ENCODE measurements at regions of chr16 and their contacts with region 1.

Region 1: DNA sequence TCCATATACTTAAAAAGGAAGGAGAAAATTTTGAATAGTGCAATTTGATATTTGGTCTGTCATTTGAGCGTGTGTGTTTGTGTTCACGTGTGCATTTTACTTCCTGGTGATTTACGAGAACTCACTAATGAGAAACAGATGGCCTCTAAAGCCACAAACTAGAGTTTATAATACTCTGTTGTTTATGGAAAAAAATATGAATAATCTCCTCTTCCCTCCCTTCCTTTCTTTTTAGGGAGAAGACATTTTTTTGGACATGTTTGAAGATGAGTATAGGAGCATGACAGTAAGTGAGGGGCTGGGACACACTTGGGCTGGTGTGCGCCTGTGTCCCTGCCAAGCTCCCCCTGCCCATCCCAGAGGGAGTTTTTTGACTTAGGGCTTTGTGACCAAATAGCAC is 102.7 kb downstream of the CLEC16A start:
- DNase-seq: peak; percentile 72
- H3K4me3 ChIP-seq: no peak overlapping the region
- H3K27ac ChIP-seq: peak overlapping the region; percentile 75
- H3K27me3 ChIP-seq: no peaks in the 10 kb centered on the region
- CTCF ChIP-seq: no peak

Region 2: DNA sequence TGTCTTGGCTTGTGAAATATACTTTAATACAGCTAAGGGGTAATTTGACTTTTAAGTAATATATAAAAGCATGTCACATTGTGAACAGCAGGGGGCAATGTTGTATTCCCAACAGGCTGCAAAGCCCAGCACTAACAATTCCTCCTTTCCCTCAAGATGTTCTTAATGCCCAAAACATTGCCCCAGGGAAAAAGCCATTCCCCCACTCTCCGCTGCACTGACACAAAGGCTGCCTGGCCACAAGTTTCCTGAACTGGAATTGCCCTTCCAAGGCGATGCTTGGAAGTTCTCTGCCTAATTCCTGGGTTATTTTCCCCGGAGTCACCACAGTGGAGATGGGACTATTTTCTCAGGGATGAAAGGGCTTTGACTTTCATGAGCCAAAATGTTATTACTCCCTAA is 75.5 kb before region 1 on chr16:
- CTCF ChIA-PET with region 1: no interaction called
- POLR2A ChIA-PET with region 1: interaction called, 10 read pairs
- DNase-seq: peak; percentile 88
- H3K4me3 ChIP-seq: no peak overlapping the region
- H3K27ac ChIP-seq: peak overlapping the region; percentile 4
- H3K27me3 ChIP-seq: no peaks in the 10 kb centered on the region
- CTCF ChIP-seq: peak; percentile 75

Region 3: GRCh38 chr16:11139326-11140097 is 92.5 kb after region 1 on chr16:
- CTCF ChIA-PET with region 1: no interaction called
- POLR2A ChIA-PET with region 1: no interaction called
- DNase-seq: no peak
- H3K4me3 ChIP-seq: no peak overlapping the region
- H3K27ac ChIP-seq: no peak overlapping the region
- H3K27me3 ChIP-seq: no peaks in the 10 kb centered on the region
- CTCF ChIP-seq: no peak

Region 4: DNA sequence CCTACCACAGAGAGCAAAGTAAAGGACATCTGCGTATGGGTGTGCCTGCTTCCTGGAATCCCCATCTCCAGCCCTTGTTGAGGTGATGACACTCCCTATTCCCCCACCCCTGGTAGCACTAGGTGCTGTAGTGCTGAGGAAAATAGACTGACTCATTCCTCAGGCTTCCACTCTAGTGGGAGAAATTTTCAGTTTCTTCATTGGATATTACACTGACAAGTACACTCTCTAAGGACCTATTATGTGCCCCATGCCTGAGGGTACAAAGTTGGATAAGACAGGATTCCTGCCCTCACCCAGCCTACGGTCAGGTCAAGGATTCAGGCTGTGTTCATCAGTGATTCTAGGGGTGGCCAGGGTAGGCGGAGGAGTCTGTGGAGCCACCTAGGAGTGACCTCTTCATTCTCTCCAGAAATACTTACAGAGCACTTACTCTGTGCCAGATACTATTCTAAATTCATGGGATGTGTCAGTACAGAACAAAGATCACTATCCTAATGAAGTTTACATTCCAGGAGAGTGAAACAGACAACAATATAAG is 754.5 kb after region 1 on chr16:
- CTCF ChIA-PET with region 1: no interaction called
- POLR2A ChIA-PET with region 1: no interaction called
- DNase-seq: no peak
- H3K4me3 ChIP-seq: no peak overlapping the region
- H3K27ac ChIP-seq: peak overlapping the region; percentile 73
- H3K27me3 ChIP-seq: no peaks in the 10 kb centered on the region
- CTCF ChIP-seq: no peak